Calu3 (cell line): ENCODE measurements at regions of chr15 and their contacts with region 1.

Region 1: GRCh38 chr15:28123408-28124023 is 24.4 kb upstream of the OCA2 start:
- DNase-seq: peak; percentile 45
- H3K4me3 Mint-ChIP-seq: no peak overlapping the region
- H3K27ac Mint-ChIP-seq: no peak overlapping the region
- H3K4me1 Mint-ChIP-seq: no peaks in the 10 kb centered on the region
- H3K27me3 Mint-ChIP-seq: no peaks in the 10 kb centered on the region
- CTCF ChIP-seq: no peak

Region 2: DNA sequence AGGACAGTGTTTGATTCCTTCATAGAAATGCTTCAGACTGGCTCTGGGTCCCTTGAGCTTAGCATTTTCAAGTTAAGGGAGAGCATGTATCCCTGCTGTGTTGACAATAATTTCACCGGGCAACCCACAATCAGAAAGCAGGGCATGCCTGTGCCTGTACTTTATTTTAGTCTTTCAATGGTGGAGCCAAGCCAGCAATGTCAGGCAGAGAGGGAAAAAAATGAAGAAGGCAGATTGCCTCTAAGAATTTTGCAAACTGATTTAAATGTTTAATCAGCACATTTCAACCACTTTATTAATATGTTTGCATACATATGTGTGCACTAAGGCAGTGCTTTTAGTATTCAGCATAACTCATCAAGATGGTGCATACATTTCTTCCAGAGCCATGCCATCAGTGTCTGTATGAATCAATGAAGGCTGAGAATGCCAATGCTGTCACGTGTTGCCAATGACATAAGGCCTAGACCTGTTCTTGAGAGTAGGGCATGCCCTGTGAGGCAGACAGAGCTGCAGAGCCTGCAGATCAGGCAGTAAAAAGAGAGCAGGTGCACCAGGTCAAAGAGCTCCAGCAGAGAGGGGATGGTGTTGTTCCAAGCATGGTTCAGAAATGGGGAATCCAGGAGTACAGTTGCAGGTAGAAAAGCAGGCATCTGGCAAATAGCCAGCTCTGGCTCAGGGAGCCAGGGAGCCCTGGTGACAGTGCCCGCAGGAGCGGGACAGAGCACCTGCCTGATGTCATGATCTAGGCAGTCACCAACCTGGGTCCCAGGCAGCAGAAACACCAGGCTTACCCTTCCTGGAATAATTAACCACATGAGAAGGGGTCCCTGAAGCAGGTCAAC is 644.0 kb before region 1 on chr15:
- CTCF ChIA-PET with region 1: no interaction called
- intact Hi-C with region 1: no loop called
- DNase-seq: no peak
- H3K4me3 Mint-ChIP-seq: no peak overlapping the region
- H3K27ac Mint-ChIP-seq: no peak overlapping the region
- H3K4me1 Mint-ChIP-seq: no peaks in the 10 kb centered on the region
- H3K27me3 Mint-ChIP-seq: no peaks in the 10 kb centered on the region
- CTCF ChIP-seq: no peak

Region 3: GRCh38 chr15:28086175-28086703 is 37.3 kb before region 1 on chr15:
- CTCF ChIA-PET with region 1: no interaction called
- intact Hi-C with region 1: loop called (anchors 1 kb)
- DNase-seq: peak; percentile 33
- H3K4me3 Mint-ChIP-seq: no peak overlapping the region
- H3K27ac Mint-ChIP-seq: no peak overlapping the region
- H3K4me1 Mint-ChIP-seq: no peaks in the 10 kb centered on the region
- H3K27me3 Mint-ChIP-seq: no peaks in the 10 kb centered on the region
- CTCF ChIP-seq: no peak